Motor neuron (in vitro differentiated cells): ENCODE measurements at regions of chr1 and their contacts with region 1.

Region 1: GRCh38 chr1:227273557-227273956 is 44.7 kb downstream of the CDC42BPA start:
- ATAC-seq: no peak
- H3K4me3 ChIP-seq: no peak overlapping the region
- H3K27ac ChIP-seq: no peak overlapping the region
- H3K4me1 ChIP-seq: no peaks in the 10 kb centered on the region

Region 2: DNA sequence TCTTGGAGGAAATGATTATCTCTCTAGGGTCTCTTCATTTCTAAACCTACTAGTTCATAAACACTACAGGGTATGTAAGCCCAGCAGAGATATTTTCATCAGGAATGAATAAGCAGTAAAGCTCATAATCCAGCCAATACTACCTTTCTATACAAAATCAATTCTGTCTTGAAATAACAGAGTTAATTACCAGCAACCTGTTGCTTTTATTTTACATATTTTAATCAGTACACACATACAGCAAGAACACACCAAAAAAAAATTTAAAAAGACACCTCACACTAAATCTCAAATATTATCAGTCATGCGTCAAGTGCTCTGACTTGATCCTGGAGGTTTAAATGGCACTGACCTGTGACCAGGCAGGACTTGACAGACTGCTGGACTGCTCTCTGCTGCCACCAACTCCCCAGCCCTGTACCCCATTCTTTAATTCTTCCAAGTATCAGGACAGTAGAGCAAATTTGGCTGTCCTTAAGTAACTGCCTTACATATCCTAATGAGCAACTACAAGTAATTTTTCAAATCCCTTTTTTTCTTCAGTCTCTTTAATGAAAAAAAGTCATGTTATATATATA is 53.8 kb before region 1 on chr1:
- in situ Hi-C with region 1: loop called in 1 of 9 experiments (anchors 10 kb)
- ATAC-seq: no peak
- H3K4me3 ChIP-seq: no peak overlapping the region
- H3K27ac ChIP-seq: no peak overlapping the region
- H3K4me1 ChIP-seq: peaks cover 0 to 2% of the 10 kb centered on the region in 2 donors

Region 3: DNA sequence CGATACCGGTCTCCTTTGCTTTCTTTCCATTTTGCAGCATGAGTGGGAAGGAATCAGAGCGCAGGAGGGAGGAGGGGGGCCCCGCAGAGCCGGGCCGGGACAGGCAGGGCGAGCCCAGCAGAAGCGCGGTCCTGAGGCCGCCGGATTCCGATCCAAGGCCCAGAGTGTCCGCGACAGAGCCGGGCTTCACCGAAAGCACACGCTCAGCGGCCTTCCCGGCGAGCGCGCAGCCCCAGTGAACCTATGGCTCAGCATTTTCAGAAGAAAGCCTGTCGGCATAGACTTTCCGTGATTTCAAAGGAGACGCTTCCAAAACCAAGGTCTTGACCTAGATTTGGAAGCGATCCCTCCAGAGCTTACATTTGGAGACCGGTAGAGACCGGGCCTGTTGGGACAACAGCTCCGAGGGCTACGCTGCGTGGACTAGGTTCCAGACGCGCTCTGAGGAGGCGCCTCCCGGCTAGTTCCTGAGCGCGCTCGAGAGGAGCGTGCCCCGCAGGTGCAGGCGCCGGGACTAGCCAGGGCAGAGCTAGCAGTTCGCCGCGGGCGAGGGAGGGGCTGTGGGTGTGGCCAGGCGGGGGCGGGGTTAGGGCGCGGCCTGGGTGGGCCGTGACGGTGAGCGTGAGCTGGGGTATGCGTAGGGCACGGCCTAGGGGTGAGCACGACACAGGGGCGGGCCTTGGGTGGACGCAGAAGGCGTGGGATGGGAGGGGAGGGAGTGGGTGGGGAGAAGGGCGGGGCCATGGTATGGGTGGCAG is 514.1 kb after region 1 on chr1:
- in situ Hi-C with region 1: no loop called
- ATAC-seq: peak; percentile 66 to 89 (median 87)
- H3K4me3 ChIP-seq: peak overlapping the region; percentile 42 to 54 (median 49)
- H3K27ac ChIP-seq: peak overlapping the region in 1 of 2 donors; percentile 9
- H3K4me1 ChIP-seq: peaks cover 7 to 13% of the 10 kb centered on the region in 2 donors